ENCODE measurements at regions of chr7 and their contacts with region 1.

Region 1: DNA sequence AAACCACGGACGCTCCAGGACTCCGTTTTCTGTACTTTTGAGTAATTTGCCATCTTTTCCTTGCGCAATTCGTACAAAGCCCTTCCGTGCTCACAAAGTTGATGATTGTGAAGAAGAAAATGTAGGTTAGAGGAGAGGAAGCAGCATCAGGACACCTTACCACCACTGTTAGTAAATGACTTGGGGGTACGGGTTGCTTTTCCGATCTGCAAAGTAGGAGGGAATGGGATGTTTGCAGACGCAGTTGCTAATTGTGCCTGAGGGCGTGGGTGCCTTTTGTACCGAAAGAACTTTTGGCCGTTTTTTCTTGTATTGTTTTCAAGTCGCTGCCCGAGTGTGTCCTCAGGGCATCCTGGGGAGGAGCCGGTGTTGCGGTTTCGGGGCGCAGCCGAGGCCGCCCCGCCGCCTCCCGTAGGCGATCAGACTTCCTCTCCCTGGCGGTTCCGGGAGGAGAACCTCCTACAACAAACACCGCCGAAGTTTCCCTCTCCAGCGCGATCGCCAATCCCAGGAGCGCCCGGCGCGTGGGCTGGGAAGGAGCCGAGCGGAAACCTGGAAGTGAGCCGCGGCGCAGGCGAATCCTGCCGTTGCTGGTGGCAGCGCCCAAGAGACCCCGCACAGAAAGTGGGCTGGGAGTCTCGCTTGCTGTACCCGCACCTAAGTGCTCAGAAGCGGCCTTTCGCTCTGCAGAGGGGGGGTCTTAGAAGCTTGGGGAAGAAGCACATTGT is 1.0 kb downstream of the PRR15 start:
- DNase-seq: peak; percentile 90
- H3K4me3 Mint-ChIP-seq: peak overlapping the region; percentile 98
- H3K27ac Mint-ChIP-seq: peak overlapping the region; percentile 94
- H3K4me1 Mint-ChIP-seq: peaks cover 19% of the 10 kb centered on the region
- H3K27me3 Mint-ChIP-seq: no peaks in the 10 kb centered on the region
- CTCF ChIP-seq: no peak

Region 2: DNA sequence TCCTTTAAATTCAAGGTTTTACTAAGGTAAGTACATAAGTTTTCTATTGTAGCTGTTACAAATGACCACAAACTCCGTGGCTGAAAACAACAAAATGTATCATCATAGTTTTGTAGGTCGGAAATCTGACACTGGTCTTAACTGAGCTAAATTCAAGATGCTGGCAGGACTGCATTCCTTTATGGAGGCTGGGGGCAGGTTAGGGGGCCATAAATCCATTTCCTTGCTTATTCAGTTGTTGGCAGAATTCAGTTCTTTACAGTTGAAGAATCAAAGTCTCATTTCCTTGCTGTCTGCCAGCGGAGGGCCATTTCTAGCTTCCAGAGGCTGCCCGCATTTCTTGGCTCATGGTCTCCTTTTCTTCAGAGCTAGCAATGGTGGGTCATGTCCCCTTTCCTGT is 12.3 kb before region 1 on chr7:
- CTCF ChIA-PET with region 1: interaction called, 4 read pairs
- POLR2A ChIA-PET with region 1: interaction called, 15 read pairs
- intact Hi-C with region 1: no loop called
- DNase-seq: no peak
- H3K4me3 Mint-ChIP-seq: no peak overlapping the region
- H3K27ac Mint-ChIP-seq: no peak overlapping the region
- H3K4me1 Mint-ChIP-seq: no peaks in the 10 kb centered on the region
- H3K27me3 Mint-ChIP-seq: no peaks in the 10 kb centered on the region
- CTCF ChIP-seq: no peak